IMR-90 (cell line): ENCODE measurements at regions of chrX and their contacts with region 1.

Region 1: DNA sequence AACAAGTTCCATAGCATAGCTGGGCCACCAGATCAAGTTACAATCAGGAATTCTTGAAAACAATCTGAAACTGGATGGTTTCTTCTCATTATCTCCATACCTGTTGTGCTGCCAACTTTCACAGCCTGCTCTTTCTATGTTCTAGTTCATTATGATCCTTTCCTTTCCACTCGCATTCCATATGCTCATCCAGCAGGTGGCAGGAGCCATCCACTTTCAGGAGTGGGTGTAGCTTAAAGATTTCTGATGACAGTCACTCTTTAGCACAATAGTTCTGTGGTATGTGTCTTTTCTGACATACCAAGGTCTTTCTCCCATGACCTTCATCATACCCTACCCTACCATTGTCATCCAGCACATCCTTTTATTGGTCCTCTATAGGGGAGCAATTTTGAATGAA is 46.4 kb downstream of the PAGE2 start:
- DNase-seq: peak; percentile 31
- ATAC-seq: peak; percentile 70
- H3K4me3 ChIP-seq: no peak overlapping the region
- H3K27ac ChIP-seq: no peak overlapping the region
- H3K4me1 ChIP-seq: no peaks in the 10 kb centered on the region
- H3K27me3 ChIP-seq: peaks cover 8% of the 10 kb centered on the region
- CTCF ChIP-seq: peak; percentile 59
- POLR2A ChIP-seq: no peak
- RAD21 ChIP-seq: peak; percentile 73

Region 2: GRCh38 chrX:55524487-55524886 is 389.3 kb after region 1 on chrX:
- CTCF ChIA-PET with region 1: no interaction called
- POLR2A ChIA-PET with region 1: no interaction called
- dilution Hi-C with region 1: no loop called
- in situ Hi-C with region 1: no loop called
- intact Hi-C with region 1: loop called (anchors 10 kb)
- DNase-seq: peak; percentile 3
- ATAC-seq: no peak
- H3K4me3 ChIP-seq: no peak overlapping the region
- H3K27ac ChIP-seq: no peak overlapping the region
- H3K4me1 ChIP-seq: no peaks in the 10 kb centered on the region
- H3K27me3 ChIP-seq: peaks cover 2% of the 10 kb centered on the region
- CTCF ChIP-seq: no peak
- POLR2A ChIP-seq: no peak
- RAD21 ChIP-seq: no peak

Region 3: GRCh38 chrX:55717521-55718497 is 582.6 kb after region 1 on chrX and contains the start of gene RRAGB:
- CTCF ChIA-PET with region 1: no interaction called
- POLR2A ChIA-PET with region 1: no interaction called
- dilution Hi-C with region 1: no loop called
- in situ Hi-C with region 1: no loop called
- intact Hi-C with region 1: loop called (anchors 1 kb)
- DNase-seq: peak; percentile 91
- ATAC-seq: peak; percentile 100
- H3K4me3 ChIP-seq: peak within 1 kb of the TSS; percentile 69
- H3K27ac ChIP-seq: peak within 1 kb of the TSS; percentile 44
- H3K4me1 ChIP-seq: no peaks in the 10 kb centered on the region
- H3K27me3 ChIP-seq: no peaks in the 10 kb centered on the region
- CTCF ChIP-seq: peak; percentile 41
- POLR2A ChIP-seq: no peak
- RAD21 ChIP-seq: no peak
- total RNA-seq, gene RRAGB: 9.1 and 17.2 TPM in 2 replicates

Region 4: GRCh38 chrX:56248492-56248891 is 1113.3 kb after region 1 on chrX:
- CTCF ChIA-PET with region 1: interaction called, 9 read pairs
- POLR2A ChIA-PET with region 1: no interaction called
- dilution Hi-C with region 1: no loop called
- in situ Hi-C with region 1: loop called (anchors 10 kb)
- intact Hi-C with region 1: loop called (anchors 1 kb)
- DNase-seq: peak; percentile 25
- ATAC-seq: peak; percentile 60
- H3K4me3 ChIP-seq: no peak overlapping the region
- H3K27ac ChIP-seq: no peak overlapping the region
- H3K4me1 ChIP-seq: no peaks in the 10 kb centered on the region
- H3K27me3 ChIP-seq: peaks cover 2% of the 10 kb centered on the region; the same call in 1 of the 2 replicates
- CTCF ChIP-seq: peak; percentile 61
- POLR2A ChIP-seq: no peak
- RAD21 ChIP-seq: peak; percentile 76

Region 5: GRCh38 chrX:56253832-56254703 is 1118.9 kb after region 1 on chrX:
- CTCF ChIA-PET with region 1: interaction called, 9 read pairs
- POLR2A ChIA-PET with region 1: no interaction called
- dilution Hi-C with region 1: no loop called
- in situ Hi-C with region 1: loop called (anchors 10 kb)
- intact Hi-C with region 1: no loop called
- DNase-seq: no peak
- ATAC-seq: no peak
- H3K4me3 ChIP-seq: no peak overlapping the region
- H3K27ac ChIP-seq: no peak overlapping the region
- H3K4me1 ChIP-seq: no peaks in the 10 kb centered on the region
- H3K27me3 ChIP-seq: no peaks in the 10 kb centered on the region; the same call in 1 of the 2 replicates
- CTCF ChIP-seq: no peak
- POLR2A ChIP-seq: no peak
- RAD21 ChIP-seq: no peak